ENCODE measurements at regions of chr3 and their contacts with region 1.

Region 1: DNA sequence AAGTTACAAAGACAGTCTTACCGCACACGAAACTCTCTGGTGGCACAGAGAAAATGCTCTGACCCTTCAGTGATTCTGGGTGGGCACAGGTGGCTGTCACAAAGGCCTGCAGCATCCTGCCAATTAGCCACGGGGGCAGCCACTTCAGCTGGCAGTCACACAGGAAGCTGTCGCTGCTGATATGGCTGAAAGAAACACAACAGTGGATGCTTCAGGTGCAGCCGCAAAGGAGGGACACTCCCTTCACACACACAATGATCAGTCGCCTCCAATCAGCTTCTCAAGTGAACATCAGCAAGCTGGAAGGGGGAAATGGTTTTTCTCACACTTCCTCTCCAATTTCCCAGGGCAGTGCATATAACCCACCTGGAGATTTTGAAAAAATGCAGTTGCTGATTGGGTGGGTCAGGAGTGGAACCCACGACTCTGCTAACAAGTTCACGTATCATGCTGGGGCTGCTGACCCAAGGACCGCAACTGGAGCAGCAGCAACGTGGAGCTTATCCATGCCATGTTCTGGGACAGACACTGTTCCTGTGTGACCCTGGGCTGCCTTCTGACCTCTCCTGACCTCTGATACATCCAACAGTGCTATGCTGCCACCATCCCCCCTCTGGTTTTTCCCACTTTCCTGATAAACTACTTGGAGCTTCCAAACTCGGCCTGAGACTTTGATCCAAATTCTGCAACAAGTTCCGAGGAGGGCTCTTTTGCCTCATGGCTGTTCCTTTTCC is 106.6 kb downstream of the LRIG1 start:
- ATAC-seq: no peak
- H3K4me3 ChIP-seq: no peak overlapping the region
- H3K27ac ChIP-seq: no peak overlapping the region
- H3K4me1 ChIP-seq: peaks cover 14% of the 10 kb centered on the region in 2 donors

Region 2: DNA sequence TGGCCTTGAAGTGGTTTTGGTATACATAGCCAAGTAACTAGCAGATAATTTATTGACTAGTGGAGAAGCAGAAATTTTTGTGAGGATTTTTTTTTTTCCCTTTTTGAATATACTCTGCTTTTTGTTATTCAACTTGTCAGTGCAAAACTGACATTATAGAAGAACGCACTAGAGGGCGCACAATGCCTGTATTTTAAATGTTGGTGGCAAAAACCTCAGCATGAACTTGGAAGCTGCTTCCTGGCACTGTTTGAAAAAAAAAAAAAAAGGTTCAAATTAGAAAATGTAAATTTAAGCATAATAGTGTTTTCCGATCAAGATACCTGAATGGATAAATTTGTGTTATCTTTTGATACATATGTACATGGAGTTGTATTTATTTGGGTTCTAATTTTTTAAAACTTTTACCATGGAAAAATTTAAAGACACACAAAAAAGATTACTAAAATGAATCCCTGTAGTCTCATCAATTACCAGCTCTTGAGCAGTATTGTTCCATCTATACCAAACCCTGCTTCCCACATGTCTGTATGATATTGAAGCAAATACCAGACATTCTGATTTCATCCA is 117.4 kb before region 1 on chr3:
- in situ Hi-C with region 1: loop called in 1 of 9 experiments (anchors 10 kb)
- ATAC-seq: peak in 4 of 8 experiments; percentile 43 to 74 (median 62)
- H3K4me3 ChIP-seq: no peak overlapping the region
- H3K27ac ChIP-seq: no peak overlapping the region
- H3K4me1 ChIP-seq: no peaks in the 10 kb centered on the region

Region 3: GRCh38 chr3:66472313-66473134 is 78.3 kb after region 1 on chr3:
- in situ Hi-C with region 1: no loop called
- ATAC-seq: peak in 4 of 8 experiments; percentile 6 to 34 (median 8)
- H3K4me3 ChIP-seq: no peak overlapping the region
- H3K27ac ChIP-seq: no peak overlapping the region
- H3K4me1 ChIP-seq: peaks cover 48 to 68% of the 10 kb centered on the region in 2 donors

Measured in motor neuron (in vitro differentiated cells).